Activated T-helper 1 cell treated with anti-CD3 and anti-CD28 coated beads, Interleukin-12 subunit alpha, Interleukin-12 subunit beta, Interleukin-2, Interleukin-4 antibody, amounts not matched to agents 30 ng/mL and 10 ng/mL and 1 ng/mL, durations not matched to agents 14 hours and 24 hours and 36 hours (primary cell): ENCODE measurements at regions of chr3 and their contacts with region 1.

Region 1: GRCh38 chr3:3150558-3150957 is 23.8 kb downstream of the TRNT1 start:
- DNase-seq: no peak
- H3K4me3 Mint-ChIP-seq: no peak overlapping the region
- H3K27ac Mint-ChIP-seq: no peak overlapping the region
- H3K4me1 Mint-ChIP-seq: peaks cover 7% of the 10 kb centered on the region
- H3K27me3 Mint-ChIP-seq: no peaks in the 10 kb centered on the region

Region 2: DNA sequence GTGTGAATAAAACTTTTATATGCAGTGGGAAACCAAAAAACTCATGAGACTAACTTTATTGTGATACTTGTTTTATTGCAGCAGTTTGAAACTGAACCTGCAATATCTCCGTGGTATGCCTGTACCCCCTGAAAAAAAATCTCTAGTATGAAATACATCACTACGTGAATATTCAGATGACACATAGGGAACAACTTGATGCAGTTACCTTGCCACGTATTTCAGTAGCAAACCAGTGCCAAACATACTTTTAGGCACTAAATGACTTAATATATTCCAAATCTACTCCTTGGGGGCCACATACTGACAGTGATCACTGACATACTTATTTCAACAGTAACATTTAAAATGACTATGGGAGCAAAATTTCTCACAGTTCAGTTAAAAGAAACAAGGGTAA is 15.1 kb after region 1 on chr3:
- intact Hi-C with region 1: loop called (anchors 2 kb)
- DNase-seq: no peak
- H3K4me3 Mint-ChIP-seq: no peak overlapping the region
- H3K27ac Mint-ChIP-seq: no peak overlapping the region
- H3K4me1 Mint-ChIP-seq: peaks cover under 1% of the 10 kb centered on the region
- H3K27me3 Mint-ChIP-seq: no peaks in the 10 kb centered on the region

Region 3: DNA sequence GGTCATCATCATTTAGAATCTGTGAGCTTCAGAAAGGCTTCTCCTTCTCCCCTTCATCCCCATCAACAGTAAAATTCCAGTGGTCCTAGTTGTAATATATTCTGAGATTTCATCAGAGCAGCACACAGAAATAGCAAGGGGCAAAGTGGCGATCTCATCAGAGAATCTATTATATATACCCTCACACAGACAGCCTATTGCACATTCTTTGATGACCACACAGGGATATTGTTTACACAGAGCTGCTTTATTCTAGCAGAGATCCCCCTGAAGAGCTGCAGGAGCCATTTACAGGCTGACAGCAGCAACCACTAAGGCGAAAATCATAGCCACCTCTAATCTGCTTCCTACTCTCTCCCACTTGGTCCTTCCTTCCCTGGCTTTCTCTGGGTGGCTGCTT is 71.0 kb after region 1 on chr3:
- intact Hi-C with region 1: no loop called
- DNase-seq: no peak
- H3K4me3 Mint-ChIP-seq: no peak overlapping the region
- H3K27ac Mint-ChIP-seq: no peak overlapping the region
- H3K4me1 Mint-ChIP-seq: no peaks in the 10 kb centered on the region
- H3K27me3 Mint-ChIP-seq: peaks cover 2% of the 10 kb centered on the region